GM10248 (cell line): ENCODE measurements at regions of chr9 and their contacts with region 1.

Region 1: DNA sequence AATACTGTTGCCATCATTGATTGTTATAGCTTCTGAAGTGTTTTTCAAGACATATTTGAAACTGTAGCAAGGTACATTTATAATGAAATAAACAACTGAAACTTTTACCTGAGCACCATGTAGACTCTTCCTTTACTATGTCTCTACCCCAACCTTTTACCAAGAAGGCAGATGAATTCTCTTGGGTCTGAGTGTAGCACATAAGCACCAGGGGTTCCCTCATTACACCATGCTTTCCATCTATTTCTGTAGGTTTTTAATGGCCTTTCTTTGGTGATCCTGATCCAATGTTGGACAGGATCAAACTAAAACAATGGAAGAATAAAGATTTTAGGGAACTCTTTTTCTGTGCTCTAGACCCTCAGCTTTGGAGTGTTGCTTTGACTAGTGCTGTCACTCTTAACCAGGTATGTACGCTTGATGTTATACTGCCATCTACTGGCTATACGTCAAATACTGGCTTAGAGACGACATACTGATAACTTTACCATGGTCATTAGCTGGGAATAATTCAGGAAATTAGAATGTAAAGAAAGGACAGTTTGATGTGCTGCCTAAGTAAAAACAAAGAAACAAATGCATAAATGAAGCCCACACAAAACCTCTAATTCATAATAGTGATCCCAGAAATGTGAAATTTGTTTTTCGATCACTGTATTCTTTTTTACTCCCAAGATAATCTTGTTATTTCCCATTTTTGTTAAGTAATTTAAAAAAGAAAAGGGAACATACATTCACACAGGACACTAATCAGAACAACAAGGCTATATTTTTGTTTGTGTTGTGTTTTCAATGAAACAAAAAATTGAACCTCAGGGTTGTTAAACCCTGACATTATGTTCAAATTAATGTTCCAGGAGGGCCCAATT is 30.7 kb downstream of the IFNW1 start:
- DNase-seq: peak; percentile 42
- CTCF ChIP-seq: peak; percentile 72

Region 2: GRCh38 chr9:19925817-19926503 is 1185.0 kb before region 1 on chr9:
- CTCF ChIA-PET with region 1: interaction called, 23 read pairs
- POLR2A ChIA-PET with region 1: no interaction called
- DNase-seq: peak; percentile 82
- CTCF ChIP-seq: peak; percentile 96

Region 3: GRCh38 chr9:20884985-20885593 is 225.9 kb before region 1 on chr9:
- CTCF ChIA-PET with region 1: interaction called, 31 read pairs
- POLR2A ChIA-PET with region 1: no interaction called
- DNase-seq: peak; percentile 16
- CTCF ChIP-seq: peak; percentile 43

Region 4: DNA sequence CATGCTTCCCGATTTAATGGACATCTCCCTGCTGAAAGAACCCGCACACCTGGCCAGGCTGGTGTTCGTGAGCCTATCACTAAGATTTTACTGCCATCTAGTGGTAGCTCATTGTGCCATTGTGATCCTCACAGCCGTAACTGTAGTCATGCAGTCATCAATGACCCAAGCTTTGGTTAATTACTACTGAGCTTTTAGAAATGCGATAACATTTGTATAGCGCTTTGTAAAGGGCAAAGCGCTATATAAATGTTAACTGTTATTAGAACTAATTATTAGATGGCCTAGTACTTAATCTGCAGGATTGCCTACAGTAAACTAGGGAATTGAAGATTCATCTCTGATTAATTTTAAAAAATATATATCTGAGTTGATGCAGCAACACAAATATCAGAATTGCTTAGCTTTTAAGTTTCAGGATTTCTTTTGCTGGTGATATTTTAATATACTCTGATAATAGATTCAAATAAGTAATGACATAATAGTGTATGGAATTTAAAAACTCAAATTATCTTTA is 169.7 kb before region 1 on chr9:
- CTCF ChIA-PET with region 1: interaction called, 21 read pairs
- POLR2A ChIA-PET with region 1: no interaction called
- DNase-seq: peak; percentile 60
- CTCF ChIP-seq: peak; percentile 72

Region 5: GRCh38 chr9:21039302-21039701 is 71.6 kb before region 1 on chr9:
- CTCF ChIA-PET with region 1: no interaction called
- POLR2A ChIA-PET with region 1: no interaction called
- DNase-seq: no peak
- CTCF ChIP-seq: no peak

Region 6: DNA sequence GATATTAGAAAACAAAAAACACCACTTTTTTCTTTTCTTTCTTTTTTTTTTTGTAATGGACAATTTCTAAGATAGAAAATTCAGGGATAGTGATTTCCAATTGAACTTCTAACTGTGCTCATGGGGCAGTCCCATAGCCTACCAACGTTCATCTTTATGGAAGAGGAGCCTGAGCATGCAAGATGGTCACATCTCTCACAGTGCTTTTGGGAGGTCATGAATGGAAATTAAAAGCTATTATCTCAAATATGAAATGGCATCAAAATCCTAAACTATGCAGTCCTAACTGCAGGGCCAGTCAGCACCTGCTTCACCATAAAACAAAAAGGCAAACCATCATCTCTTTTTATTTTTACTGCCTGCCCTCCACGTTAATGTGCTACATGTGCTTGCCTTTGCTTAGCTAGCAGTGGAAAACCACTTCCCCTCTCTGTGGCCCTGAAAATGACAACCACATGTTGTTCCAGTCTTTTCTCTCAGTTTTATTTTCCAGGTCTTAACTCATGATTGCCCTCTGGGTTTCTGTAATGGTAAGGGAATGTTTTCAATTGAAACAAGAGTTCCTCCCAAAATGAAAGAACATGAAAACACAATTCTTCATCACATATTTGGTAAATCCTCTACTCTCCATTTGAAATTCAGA is 49.9 kb before region 1 on chr9:
- CTCF ChIA-PET with region 1: no interaction called
- POLR2A ChIA-PET with region 1: no interaction called
- DNase-seq: no peak
- CTCF ChIP-seq: no peak

Region 7: DNA sequence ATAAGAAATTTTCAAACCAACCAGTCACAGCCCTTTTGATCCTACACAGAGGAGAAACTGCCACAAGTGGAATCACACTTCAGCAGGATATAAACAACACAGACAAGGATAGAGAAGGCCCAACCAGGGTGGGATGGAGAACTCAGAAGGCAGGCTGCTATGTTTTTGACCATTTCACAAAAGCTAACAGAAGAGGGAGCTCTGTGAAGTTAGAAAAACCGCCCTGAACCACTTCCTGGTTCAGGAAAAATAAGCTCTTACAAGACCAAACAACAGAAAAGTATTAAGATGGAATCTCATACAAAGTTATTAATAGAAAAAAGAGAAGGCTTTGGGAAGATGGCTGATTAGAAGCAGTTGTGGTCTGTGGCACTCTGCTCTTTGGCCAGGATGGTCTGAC is 32.2 kb before region 1 on chr9:
- CTCF ChIA-PET with region 1: interaction called, 10 read pairs
- POLR2A ChIA-PET with region 1: no interaction called
- DNase-seq: no peak
- CTCF ChIP-seq: no peak

Region 8: DNA sequence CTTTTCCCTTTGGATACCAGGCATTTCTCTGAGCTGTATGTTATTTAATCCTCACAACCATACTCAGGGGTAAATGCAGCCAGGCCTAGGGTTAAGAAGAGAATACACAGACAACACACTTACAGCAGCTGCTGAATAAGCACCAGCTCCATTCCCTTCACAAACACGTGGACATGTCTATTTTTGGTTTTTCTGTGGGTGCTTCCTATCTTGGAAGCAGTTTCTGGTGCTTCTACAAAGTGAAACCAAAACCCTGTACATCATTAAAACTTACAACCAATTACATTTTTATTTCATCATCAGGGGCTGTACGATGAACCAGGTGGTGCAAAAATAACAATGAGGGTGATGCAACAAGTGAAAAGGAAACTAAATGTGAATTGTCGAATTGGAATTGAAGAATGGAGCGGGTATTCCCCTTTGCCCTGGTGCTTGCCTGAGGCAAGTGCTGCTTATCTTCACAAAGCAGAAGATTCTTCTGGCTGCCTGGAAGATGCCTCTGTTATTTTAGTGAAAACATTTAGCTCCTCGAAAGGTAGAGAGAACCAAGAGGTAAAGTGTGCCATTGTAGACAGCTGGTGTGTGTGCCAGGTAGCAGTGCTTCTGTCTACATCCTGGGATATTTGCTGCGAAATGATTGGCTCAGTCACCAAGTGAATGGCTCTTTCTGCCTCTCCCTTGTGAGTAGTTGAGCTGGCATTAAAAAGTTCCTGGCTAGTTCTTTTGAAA is 14.6 kb before region 1 on chr9:
- CTCF ChIA-PET with region 1: interaction called, 19 read pairs
- POLR2A ChIA-PET with region 1: no interaction called
- DNase-seq: peak; percentile 42
- CTCF ChIP-seq: no peak

Region 9: DNA sequence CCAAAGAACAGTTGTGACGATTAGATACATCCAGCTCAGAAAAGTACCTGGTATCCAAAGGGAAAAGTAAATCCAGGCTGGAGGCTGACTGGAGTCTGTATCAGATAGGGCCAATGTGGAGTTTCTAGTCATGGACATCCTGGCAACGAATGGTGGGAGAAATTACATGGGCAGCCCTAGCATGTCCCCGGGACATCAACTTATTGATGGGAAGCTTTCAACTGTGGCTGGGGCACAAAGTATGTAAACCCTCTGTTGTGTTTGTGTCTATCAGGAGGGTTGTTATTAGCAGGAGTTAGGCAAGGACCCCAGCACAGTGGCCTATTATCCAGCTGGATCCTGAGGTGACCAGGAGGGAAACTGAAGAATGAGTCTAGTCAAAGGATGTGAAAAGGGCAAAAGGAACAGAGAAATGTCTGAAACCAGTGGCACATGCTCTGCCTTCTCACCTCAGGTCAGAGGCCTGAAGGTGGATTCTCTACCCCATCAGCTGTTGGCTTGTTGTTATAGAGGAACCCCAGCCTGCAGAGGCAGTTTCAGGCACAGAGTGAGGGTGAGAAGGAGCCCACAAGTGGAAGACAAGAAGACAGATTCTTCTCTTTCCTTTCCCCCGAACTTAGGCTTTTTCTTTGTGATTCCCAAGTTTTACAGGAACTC is 10.8 kb after region 1 on chr9:
- CTCF ChIA-PET with region 1: interaction called, 12 read pairs
- POLR2A ChIA-PET with region 1: no interaction called
- DNase-seq: no peak
- CTCF ChIP-seq: no peak

Region 10: GRCh38 chr9:21252721-21253547 is 142.0 kb after region 1 on chr9:
- CTCF ChIA-PET with region 1: no interaction called
- POLR2A ChIA-PET with region 1: no interaction called
- DNase-seq: peak; percentile 39
- CTCF ChIP-seq: peak; percentile 53

Region 11: GRCh38 chr9:21789541-21790037 is 678.6 kb after region 1 on chr9:
- CTCF ChIA-PET with region 1: no interaction called
- POLR2A ChIA-PET with region 1: no interaction called
- DNase-seq: peak; percentile 58
- CTCF ChIP-seq: peak; percentile 78